Calu3 (cell line): ENCODE measurements at regions of chr1 and their contacts with region 1.

Region 1: DNA sequence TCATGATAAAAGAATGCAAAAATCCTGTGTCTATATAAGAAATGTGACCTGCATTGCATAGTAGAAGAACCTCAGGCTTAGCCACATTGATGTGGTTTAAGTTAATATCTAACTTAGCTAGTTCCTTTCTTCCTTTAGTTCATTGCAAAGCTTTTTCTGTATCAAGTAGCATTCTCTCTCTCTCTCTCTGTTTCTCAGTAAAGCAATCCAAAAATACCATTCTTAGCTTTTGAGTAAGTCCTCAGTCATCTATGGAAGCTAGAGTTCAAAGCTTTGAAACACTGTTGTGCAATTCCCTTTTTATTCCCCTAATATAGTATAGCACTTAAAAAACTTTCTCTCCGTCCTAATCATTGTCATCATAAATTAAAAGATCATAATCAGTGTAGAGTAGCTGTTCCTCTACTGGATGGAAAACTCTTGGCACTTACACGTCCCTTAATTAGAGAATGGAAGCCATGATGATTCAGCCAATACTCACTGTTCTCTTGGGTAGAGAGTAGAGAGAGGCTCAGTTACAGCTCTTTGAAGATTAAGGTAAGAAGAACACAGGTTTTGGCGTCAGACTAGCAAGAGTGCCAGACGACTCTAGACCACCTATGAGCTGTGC is 350.3 kb upstream of the LYPLAL1 start:
- DNase-seq: peak; percentile 19
- H3K4me3 Mint-ChIP-seq: no peak overlapping the region
- H3K27ac Mint-ChIP-seq: peak overlapping the region; percentile 77
- H3K4me1 Mint-ChIP-seq: peaks cover 57% of the 10 kb centered on the region
- H3K27me3 Mint-ChIP-seq: no peaks in the 10 kb centered on the region
- CTCF ChIP-seq: no peak

Region 2: GRCh38 chr1:218865591-218865990 is 42.2 kb after region 1 on chr1:
- CTCF ChIA-PET with region 1: interaction called, 6 read pairs
- intact Hi-C with region 1: loop called (anchors 2 kb)
- DNase-seq: peak; percentile 61
- H3K4me3 Mint-ChIP-seq: no peak overlapping the region
- H3K27ac Mint-ChIP-seq: peak overlapping the region; percentile 77
- H3K4me1 Mint-ChIP-seq: peaks cover 72% of the 10 kb centered on the region
- H3K27me3 Mint-ChIP-seq: no peaks in the 10 kb centered on the region
- CTCF ChIP-seq: no peak

Region 3: GRCh38 chr1:218890451-218890850 is 67.1 kb after region 1 on chr1:
- CTCF ChIA-PET with region 1: no interaction called
- intact Hi-C with region 1: no loop called
- DNase-seq: no peak
- H3K4me3 Mint-ChIP-seq: no peak overlapping the region
- H3K27ac Mint-ChIP-seq: no peak overlapping the region
- H3K4me1 Mint-ChIP-seq: peaks cover 40% of the 10 kb centered on the region
- H3K27me3 Mint-ChIP-seq: no peaks in the 10 kb centered on the region
- CTCF ChIP-seq: no peak

Region 4: GRCh38 chr1:218933513-218933912 is 110.1 kb after region 1 on chr1:
- CTCF ChIA-PET with region 1: no interaction called
- intact Hi-C with region 1: no loop called
- DNase-seq: no peak
- H3K4me3 Mint-ChIP-seq: no peak overlapping the region
- H3K27ac Mint-ChIP-seq: no peak overlapping the region
- H3K4me1 Mint-ChIP-seq: peaks cover 38% of the 10 kb centered on the region
- H3K27me3 Mint-ChIP-seq: no peaks in the 10 kb centered on the region
- CTCF ChIP-seq: no peak

Region 5: DNA sequence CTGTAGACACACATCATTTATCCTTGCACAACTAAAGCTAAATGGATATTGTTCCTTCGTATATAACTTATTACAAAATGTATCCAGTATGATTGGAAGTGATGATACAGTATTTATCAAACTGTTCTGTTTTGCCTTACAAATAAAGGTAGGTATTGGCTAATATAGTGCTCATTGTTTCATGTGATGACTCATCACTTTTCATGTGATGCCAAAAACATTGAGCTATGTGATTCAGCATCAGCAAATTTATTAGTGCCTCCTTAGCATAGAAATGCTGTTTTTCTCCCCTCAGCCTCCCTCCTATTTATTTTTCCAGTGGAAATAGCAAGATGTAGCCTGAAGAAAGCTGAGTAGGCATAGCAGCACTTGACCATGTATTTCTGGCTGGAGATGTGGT is 121.7 kb after region 1 on chr1:
- CTCF ChIA-PET with region 1: no interaction called
- intact Hi-C with region 1: loop called (anchors 5 kb)
- DNase-seq: no peak
- H3K4me3 Mint-ChIP-seq: no peak overlapping the region
- H3K27ac Mint-ChIP-seq: peak overlapping the region; percentile 66
- H3K4me1 Mint-ChIP-seq: peaks cover 51% of the 10 kb centered on the region
- H3K27me3 Mint-ChIP-seq: no peaks in the 10 kb centered on the region
- CTCF ChIP-seq: no peak